GM18951 (cell line): ENCODE measurements at regions of chr3 and their contacts with region 1.

Region 1: GRCh38 chr3:184874709-184875644 is 63.0 kb downstream of the VPS8 start:
- POLR2A ChIP-seq: no peak

Region 2: DNA sequence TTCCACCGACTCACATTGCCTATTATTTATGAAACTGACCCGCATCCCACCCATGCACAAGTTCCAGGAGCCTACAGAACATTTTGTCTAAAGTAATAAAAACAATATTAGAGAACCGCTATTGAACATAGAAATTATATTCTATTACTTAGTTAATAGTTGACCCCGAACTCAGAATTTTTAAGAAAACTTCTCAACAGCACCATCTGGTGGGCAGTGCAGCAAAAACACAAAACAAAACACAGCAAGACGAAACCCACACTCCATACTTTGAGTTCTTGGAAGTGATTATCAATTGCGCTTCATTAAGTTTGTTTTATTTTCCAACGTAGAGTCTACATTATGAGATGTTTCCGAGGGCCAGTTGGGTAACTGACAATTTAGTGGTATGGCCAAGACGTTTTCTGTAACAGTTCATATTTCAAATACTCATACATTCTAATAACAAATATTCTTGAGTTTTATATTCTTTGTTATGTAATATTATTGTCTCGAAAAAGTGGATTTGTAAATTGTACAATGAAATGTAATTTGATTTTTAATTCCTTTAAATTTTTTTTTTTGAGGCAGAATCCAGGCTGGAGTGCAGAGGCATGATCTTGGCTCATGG is 301.9 kb after region 1 on chr3:
- in situ Hi-C with region 1: loop called (anchors 25 kb)
- POLR2A ChIP-seq: no peak